Pancreas (tissue), 10 donors: ENCODE measurements at regions of chr22 and their contacts with region 1.

Region 1: DNA sequence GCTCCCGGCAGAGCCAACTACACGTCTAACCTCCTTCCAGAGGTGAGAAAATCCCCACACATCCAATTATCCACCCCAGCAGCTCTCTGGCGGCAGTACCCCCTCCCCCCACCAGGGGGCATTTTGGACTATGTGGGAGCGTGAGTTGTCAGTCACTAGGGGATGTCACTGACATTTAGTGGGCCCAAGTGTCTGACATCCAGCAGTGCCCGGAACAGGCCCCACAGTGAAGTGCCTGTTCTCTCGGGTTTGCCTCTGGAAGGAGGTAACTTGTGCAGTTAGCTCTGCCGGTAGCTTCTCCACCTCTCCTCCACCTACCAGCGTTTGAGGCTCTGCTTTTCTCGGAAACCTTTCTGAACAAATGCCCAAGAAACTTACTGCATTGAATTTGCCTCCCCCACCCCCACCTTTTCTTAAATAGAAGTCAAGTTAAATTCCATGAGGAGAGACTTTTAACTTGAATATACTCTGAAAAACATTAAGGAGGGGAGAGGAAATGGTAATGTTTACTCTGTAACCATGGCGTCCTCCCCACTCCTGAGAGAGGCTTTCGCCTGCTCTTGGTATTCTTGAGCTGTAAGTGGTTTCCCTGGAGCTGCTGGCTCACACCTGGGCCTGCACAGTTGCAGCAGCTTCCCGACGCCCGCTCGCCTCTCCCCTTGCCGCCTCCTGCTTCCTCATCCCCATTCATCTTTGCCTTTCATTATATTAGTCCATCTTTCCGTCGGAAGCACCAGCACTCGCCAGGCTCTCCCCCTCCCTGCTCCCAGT is 112.8 kb downstream of the WNT7B start:
- DNase-seq: peak in 4 of 6 donors; percentile 27 to 90 (median 62)
- ATAC-seq: peak in 3 of 4 donors; percentile 50 to 78 (median 70)
- H3K4me3 ChIP-seq: no peak overlapping the region
- H3K27ac ChIP-seq: no peak overlapping the region
- H3K4me1 ChIP-seq: no peaks in the 10 kb centered on the region
- H3K27me3 ChIP-seq: no peaks in the 10 kb centered on the region
- CTCF ChIP-seq: peak; percentile 82 to 95 (median 86)

Region 2: GRCh38 chr22:45572423-45572822 is 291.7 kb before region 1 on chr22:
- intact Hi-C with region 1: loop called in 1 of 3 experiments (anchors 5 kb)
- DNase-seq: no peak
- ATAC-seq: no peak
- H3K4me3 ChIP-seq: no peak overlapping the region
- H3K27ac ChIP-seq: no peak overlapping the region
- H3K4me1 ChIP-seq: no peaks in the 10 kb centered on the region
- H3K27me3 ChIP-seq: no peaks in the 10 kb centered on the region
- CTCF ChIP-seq: no peak

Region 3: GRCh38 chr22:45645526-45646414 is 218.4 kb before region 1 on chr22:
- intact Hi-C with region 1: loop called in 1 of 3 experiments (anchors 10 kb)
- DNase-seq: peak; percentile 45 to 96 (median 82)
- ATAC-seq: peak; percentile 96 to 99 (median 98)
- H3K4me3 ChIP-seq: no peak overlapping the region
- H3K27ac ChIP-seq: no peak overlapping the region
- H3K4me1 ChIP-seq: no peaks in the 10 kb centered on the region
- H3K27me3 ChIP-seq: no peaks in the 10 kb centered on the region
- CTCF ChIP-seq: peak; percentile 93 to 95 (median 93)